ENCODE measurements at regions of chr12 and their contacts with region 1.

Region 1: GRCh38 chr12:53195516-53196420 is 11.3 kb downstream of the ITGB7 start:
- DNase-seq: no peak
- ATAC-seq: no peak

Region 2: DNA sequence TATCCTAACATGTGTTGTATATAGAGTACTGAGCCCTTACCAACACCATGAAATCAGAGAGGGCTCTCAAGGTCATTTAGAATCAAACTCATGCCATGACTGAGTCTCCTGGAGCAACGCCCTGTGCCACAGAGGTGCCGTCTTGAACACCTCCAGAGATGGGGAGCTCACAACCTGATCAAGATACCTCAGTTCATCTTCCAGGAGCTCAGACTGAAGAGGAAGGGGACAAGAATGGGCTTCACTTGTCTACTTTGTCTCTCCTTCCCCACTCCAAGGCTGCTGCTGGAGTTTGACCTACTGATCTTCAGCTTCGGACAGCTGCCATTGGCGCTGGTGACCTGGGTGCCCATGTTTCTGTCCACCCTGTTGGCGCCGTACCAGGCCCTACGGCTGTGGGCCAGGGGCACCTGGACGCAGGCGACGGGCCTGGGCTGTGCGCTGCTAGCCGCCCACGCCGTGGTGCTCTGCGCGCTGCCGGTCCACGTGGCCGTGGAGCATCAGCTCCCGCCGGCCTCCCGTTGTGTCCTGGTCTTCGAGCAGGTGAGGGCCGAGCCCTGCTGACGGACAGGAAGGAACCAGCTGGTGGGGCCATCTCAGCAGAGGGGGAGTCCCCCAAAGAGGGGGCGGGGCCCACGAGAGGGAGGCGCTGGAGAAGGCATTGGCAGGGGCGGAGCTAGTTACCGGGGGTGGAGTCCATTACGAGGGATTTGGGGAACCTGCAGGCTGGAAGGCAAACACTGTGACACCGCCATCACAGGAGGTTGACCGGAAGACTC is 80.5 kb before region 1 on chr12:
- intact Hi-C with region 1: no loop called
- DNase-seq: peak; percentile 68
- ATAC-seq: no peak

Region 3: GRCh38 chr12:53159195-53159839 is 36.5 kb before region 1 on chr12:
- intact Hi-C with region 1: loop called (anchors 2 kb)
- DNase-seq: peak; percentile 89
- ATAC-seq: peak; percentile 75

Region 4: GRCh38 chr12:53174881-53175491 is 20.8 kb before region 1 on chr12:
- intact Hi-C with region 1: no loop called
- DNase-seq: no peak
- ATAC-seq: no peak